MCF 10A (cell line): ENCODE measurements at regions of chr13 and their contacts with region 1.

Region 1: DNA sequence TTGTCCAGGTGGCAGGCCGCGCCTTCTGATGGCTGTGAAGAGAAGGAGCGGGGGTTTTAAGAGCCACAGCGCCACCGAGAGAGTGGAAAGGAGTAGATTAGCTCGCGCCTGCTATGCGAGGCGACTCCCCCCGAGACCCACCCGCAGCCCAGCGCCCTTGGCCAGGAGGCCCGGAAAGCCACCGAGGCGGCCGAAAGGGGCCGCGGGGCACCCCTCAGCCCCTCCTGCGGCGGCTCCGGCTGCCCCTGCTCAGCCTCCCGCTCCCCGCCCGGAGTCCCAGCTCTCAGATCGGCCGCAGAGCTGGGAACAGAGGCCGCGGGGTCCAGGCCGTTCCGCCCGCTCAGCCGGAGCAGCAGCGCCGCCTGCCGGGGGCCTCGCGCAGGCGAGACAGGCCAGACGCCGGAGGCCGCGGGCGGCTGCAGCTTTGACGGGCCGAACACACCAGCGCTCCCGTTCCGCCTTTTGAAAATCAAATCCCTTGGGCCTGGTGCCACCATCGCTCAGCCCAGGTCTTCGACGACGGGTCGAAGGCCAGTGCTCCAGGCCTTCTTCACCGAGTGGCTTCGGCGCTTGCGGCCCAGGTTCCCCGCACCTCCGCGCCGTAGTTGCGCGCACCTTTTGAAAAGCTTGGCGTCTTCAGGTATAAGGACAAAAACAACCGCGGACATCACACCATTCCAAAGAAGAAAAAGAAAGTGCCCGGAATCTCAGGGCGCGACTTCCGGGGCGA is 15.3 kb downstream of the CDX2 start:
- DNase-seq: peak; percentile 70
- H3K4me3 Mint-ChIP-seq: peak overlapping the region; percentile 37
- H3K27ac Mint-ChIP-seq: peak overlapping the region; percentile 62
- H3K4me1 Mint-ChIP-seq: no peaks in the 10 kb centered on the region
- H3K27me3 Mint-ChIP-seq: no peaks in the 10 kb centered on the region
- CTCF ChIP-seq: peak; percentile 96

Region 2: GRCh38 chr13:27556109-27556508 is 397.7 kb before region 1 on chr13:
- CTCF ChIA-PET with region 1: no interaction called
- POLR2A ChIA-PET with region 1: no interaction called
- intact Hi-C with region 1: loop called (anchors 2 kb)
- DNase-seq: peak; percentile 83
- H3K4me3 Mint-ChIP-seq: no peak overlapping the region
- H3K27ac Mint-ChIP-seq: no peak overlapping the region
- H3K4me1 Mint-ChIP-seq: peaks cover 10% of the 10 kb centered on the region
- H3K27me3 Mint-ChIP-seq: no peaks in the 10 kb centered on the region
- CTCF ChIP-seq: peak; percentile 10

Region 3: GRCh38 chr13:27770809-27771208 is 183.0 kb before region 1 on chr13:
- CTCF ChIA-PET with region 1: interaction called, 3 read pairs
- POLR2A ChIA-PET with region 1: no interaction called
- intact Hi-C with region 1: loop called (anchors 10 kb)
- DNase-seq: peak; percentile 66
- H3K4me3 Mint-ChIP-seq: no peak overlapping the region
- H3K27ac Mint-ChIP-seq: no peak overlapping the region
- H3K4me1 Mint-ChIP-seq: peaks cover 6% of the 10 kb centered on the region
- H3K27me3 Mint-ChIP-seq: no peaks in the 10 kb centered on the region
- CTCF ChIP-seq: peak; percentile 45

Region 4: DNA sequence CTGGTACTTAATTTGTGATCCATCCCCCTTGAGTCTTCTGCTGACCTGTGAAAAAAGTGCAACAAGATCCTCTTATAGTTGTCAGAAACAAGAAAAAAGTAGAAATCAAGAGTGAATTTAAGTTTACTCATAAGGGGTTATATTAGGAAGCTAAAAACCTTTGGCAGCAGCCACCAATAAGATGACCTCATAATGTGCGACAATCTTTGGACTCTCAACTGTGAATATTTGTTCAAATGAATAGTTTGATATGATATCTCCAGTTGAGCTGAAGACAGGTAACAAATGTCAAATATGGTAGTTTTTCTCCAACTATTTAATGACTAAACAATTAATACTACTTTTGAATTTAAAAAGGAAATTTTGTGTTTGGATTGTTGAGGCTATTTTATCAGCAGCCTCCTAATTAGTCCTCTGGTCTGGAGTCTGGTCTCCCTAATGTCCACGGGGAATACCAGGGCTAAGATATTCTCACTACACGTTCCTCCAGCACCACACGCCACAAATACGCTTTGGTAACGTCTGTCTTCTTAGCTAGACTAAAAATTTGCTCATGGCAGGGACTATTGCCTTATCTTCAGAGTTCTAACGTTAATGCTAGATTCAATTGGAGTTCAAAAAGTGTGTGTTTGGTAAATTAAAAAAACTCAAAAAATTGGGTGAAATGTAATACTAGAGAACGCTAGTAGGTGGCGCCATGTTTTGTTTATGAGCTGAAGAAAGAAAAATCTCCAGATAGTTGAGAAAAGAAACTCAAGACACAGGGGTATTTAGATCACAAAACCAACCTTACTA is 85.0 kb before region 1 on chr13:
- CTCF ChIA-PET with region 1: interaction called, 8 read pairs
- POLR2A ChIA-PET with region 1: no interaction called
- intact Hi-C with region 1: loop called (anchors 2 kb)
- DNase-seq: peak; percentile 26
- H3K4me3 Mint-ChIP-seq: no peak overlapping the region
- H3K27ac Mint-ChIP-seq: no peak overlapping the region
- H3K4me1 Mint-ChIP-seq: peaks cover 6% of the 10 kb centered on the region
- H3K27me3 Mint-ChIP-seq: no peaks in the 10 kb centered on the region
- CTCF ChIP-seq: peak; percentile 60